ENCODE measurements at regions of chr9 and their contacts with region 1.

Region 1: GRCh38 chr9:4590430-4591122 is 71.5 kb upstream of the PLPP6 start:
- DNase-seq: no peak
- ATAC-seq: no peak
- H3K4me3 ChIP-seq: no peak overlapping the region
- H3K27ac ChIP-seq: no peak overlapping the region
- H3K4me1 ChIP-seq: no peaks in the 10 kb centered on the region
- CTCF ChIP-seq: no peak
- EP300 ChIP-seq: no peak
- POLR2A ChIP-seq: no peak
- RAD21 ChIP-seq: no peak

Region 2: GRCh38 chr9:4604678-4605095 is 14.1 kb after region 1 on chr9:
- CTCF ChIA-PET with region 1: interaction called, 11 read pairs
- POLR2A ChIA-PET with region 1: no interaction called
- DNase-seq: peak; percentile 68 to 75
- ATAC-seq: peak; percentile 96 to 98
- H3K4me3 ChIP-seq: no peak overlapping the region
- H3K27ac ChIP-seq: no peak overlapping the region
- H3K4me1 ChIP-seq: no peaks in the 10 kb centered on the region
- CTCF ChIP-seq: peak; percentile 77
- EP300 ChIP-seq: no peak
- POLR2A ChIP-seq: no peak
- RAD21 ChIP-seq: peak; percentile 71 to 75